ENCODE measurements at regions of chr3 and their contacts with region 1.

Region 1: GRCh38 chr3:99895703-99896441 is 78.2 kb downstream of the CMSS1 start:
- H3K4me3 Mint-ChIP-seq: peak overlapping the region; percentile 56
- H3K27ac Mint-ChIP-seq: peak overlapping the region; percentile 95
- H3K4me1 Mint-ChIP-seq: peaks cover 22% of the 10 kb centered on the region
- H3K27me3 Mint-ChIP-seq: no peaks in the 10 kb centered on the region

Region 2: GRCh38 chr3:99875929-99876841 is 19.7 kb before region 1 on chr3:
- intact Hi-C with region 1: loop called (anchors 1 kb)
- H3K4me3 Mint-ChIP-seq: peak overlapping the region; percentile 74
- H3K27ac Mint-ChIP-seq: peak overlapping the region; percentile 92
- H3K4me1 Mint-ChIP-seq: peaks cover 36% of the 10 kb centered on the region
- H3K27me3 Mint-ChIP-seq: no peaks in the 10 kb centered on the region

Region 3: DNA sequence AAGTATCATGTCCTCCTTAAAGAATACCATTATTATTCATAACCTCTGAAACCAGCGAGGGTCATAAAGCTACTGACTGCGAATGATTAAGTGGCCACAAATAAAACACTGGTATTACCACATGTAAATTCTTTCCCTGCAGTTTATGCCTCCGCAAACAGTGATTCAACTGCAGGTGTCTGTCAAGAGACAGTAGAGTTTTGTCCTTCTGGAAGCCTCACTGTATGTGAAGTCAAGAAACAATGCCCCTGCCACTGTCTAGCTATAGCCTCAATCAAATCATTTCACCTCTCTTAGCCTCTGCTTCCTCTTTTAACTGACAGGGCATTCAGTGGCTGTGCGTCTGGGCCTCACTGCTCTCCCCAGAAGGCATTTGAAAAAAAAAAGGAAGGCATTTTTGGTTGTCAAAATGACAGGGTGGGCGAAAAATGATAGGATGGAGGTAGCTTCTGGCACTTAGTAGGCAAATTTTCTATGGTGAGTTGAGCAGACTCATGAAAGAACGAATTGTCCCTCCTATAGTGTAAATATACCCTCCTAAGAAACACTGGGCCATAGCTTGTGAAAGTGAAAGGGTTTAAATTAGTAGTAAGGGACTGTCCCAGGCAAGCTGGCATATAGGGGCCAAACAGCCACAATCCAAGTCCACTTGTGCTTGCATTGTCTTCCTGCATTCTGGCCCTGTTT is 151.7 kb after region 1 on chr3:
- intact Hi-C with region 1: loop called (anchors 5 kb)
- H3K4me3 Mint-ChIP-seq: peak overlapping the region; percentile 28
- H3K27ac Mint-ChIP-seq: peak overlapping the region; percentile 72
- H3K4me1 Mint-ChIP-seq: peaks cover 51% of the 10 kb centered on the region
- H3K27me3 Mint-ChIP-seq: no peaks in the 10 kb centered on the region

Measured in dendritic cell treated with granulocyte-macrophage colony-stimulating factor and Interleukin-4, amounts not matched to agents 40 ng/mL and 50 ng/mL, for 4 days (primary cell).